GM10248 (cell line): ENCODE measurements at regions of chr7 and their contacts with region 1.

Region 1: GRCh38 chr7:129024125-129024524 is 30.8 kb downstream of the TNPO3 start:
- DNase-seq: no peak
- CTCF ChIP-seq: no peak

Region 2: DNA sequence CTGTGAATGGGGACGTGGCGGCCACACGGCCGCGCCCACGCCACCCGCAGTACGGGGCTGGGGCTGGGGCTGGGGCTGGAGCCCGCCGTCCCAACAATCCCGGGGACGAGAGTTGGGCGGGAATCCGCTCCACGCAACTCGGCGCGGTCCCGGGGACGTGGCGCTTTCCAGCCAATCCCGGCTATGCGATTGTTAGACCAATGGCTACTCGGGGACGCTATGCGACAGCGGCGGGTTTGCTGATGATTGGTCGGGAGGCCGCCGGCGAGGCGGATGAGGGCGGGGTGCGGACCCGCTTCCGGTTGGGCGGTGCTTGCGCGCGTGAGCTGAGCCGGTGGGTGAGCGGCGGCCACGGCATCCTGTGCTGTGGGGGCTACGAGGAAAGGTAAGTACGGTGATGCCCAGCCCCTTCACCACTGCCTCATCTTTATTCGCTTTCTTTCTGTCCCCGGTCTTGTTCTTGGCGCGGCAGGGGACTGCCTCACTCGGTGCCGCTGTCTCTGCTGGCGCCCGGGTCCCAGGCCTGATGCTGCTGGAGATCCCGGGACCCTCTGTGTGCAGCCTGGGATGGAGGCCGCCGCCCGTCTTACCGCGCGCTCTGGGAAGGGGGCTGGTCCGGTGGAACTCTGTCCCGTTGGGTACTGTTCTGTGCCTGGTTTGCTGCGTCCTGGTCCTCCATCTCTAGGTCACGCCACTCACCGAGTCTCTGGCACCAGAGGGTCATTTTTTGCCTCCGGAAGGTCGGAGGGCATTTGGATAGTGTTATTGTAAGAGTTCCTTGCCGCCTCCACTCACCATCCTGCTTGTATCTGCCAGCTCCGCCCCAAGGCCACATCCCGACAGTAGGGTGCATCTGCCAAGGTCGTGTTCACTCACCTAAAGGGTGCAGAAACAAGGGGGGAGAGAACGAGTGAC is 284.8 kb before region 1 on chr7 and contains the start of gene CALU:
- CTCF ChIA-PET with region 1: no interaction called
- POLR2A ChIA-PET with region 1: no interaction called
- DNase-seq: peak; percentile 100
- CTCF ChIP-seq: no peak

Region 3: DNA sequence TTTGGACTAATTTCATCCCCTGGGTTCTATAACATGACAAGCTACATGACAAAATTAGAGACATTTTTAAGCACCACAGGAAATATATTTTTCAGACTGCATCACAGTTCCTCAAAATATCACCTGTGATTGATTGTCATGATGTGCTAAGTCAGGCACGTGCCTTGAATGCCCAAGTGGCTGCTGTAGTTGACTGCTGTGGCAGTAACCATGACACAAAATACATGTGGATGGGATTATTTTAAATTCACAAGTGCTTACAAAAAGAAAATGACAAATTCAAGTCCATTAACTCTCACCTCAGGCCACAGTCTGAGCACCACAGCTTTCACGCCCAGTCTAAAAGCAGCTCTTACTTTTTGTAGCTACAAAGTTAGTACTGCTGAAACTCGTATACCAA is 14.7 kb before region 1 on chr7:
- CTCF ChIA-PET with region 1: interaction called, 17 read pairs
- POLR2A ChIA-PET with region 1: no interaction called
- DNase-seq: peak; percentile 38
- CTCF ChIP-seq: no peak